Heart right ventricle (tissue), 16 donors: ENCODE measurements at regions of chr10 and their contacts with region 1.

Region 1: DNA sequence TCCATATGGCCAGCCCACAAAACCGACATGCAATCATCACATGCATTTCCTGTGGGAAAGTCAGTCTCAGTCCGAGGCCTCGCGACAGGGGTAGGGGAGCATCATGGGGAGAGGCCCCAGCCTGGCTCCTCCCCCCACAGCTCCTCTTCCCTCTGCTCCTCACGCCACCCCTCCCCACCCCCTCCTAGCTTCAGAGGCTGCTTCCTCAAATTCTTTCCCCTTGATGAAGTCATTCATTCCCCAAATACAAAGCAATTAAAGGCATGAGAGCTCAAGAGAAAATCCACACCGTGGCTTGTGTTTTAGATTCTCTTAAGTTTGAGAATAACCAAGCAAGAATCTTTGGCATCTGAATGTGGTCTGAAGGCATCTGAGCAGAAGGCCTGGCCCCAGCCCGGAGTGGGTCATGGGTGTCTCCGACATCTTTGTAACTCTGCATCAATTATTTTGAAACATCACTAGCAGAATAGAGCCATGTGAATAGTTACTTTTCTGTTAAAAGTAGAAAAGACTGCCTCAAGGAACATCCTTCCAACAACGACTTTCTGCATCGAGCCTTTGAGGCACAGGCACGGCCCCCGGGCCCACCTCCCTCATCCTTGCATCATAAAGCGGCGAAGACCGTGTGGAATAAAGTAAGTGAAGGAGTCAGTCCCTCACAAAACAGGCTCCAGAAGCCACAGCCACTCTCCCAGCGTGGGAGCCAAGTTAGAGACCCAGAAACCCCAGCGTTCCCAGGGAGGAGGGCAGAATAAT is 90.9 kb downstream of the DIP2C start:
- DNase-seq: no peak
- ATAC-seq: no peak
- H3K4me3 ChIP-seq: no peak overlapping the region
- H3K27ac ChIP-seq: no peak overlapping the region
- H3K4me1 ChIP-seq: peaks cover 8 to 55% (median 25%) of the 10 kb centered on the region in 9 donors
- H3K27me3 ChIP-seq: no peaks in the 10 kb centered on the region
- CTCF ChIP-seq: no peak

Region 2: DNA sequence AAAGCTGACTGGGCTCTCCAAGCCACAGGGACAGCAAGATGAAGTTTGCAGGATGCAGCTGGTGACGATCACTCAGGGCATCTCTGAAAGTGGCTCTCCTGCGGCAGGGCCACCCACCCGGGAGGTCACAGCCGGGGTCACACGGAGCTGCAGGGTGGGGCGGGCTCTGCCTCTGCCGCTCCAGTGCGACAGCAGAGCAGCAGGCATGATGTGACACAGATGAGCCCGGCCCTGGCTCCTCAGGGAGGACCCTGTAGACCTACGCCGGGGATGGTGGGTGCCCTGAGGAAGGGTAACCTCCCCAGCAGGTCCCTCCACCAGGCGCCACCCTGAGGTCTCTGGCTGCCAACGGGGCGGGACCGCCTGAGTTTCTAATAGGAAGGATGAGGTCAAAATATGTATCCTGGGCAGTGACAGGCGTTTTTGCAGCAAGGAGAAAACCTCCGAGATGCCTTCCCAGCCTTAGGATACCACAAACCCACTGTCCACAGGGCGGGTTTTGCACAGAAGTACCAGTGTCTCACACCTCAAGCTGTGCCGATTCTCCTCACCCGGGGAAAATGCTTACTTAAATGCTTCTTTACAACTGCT is 205.7 kb after region 1 on chr10:
- intact Hi-C with region 1: loop called in 1 of 10 experiments (anchors 10 kb)
- DNase-seq: no peak
- ATAC-seq: peak in 1 of 8 donors; percentile 7
- H3K4me3 ChIP-seq: no peak overlapping the region
- H3K27ac ChIP-seq: no peak overlapping the region
- H3K4me1 ChIP-seq: peaks cover 0 to 10% (median 4%) of the 10 kb centered on the region in 9 donors
- H3K27me3 ChIP-seq: no peaks in the 10 kb centered on the region
- CTCF ChIP-seq: no peak

Region 3: DNA sequence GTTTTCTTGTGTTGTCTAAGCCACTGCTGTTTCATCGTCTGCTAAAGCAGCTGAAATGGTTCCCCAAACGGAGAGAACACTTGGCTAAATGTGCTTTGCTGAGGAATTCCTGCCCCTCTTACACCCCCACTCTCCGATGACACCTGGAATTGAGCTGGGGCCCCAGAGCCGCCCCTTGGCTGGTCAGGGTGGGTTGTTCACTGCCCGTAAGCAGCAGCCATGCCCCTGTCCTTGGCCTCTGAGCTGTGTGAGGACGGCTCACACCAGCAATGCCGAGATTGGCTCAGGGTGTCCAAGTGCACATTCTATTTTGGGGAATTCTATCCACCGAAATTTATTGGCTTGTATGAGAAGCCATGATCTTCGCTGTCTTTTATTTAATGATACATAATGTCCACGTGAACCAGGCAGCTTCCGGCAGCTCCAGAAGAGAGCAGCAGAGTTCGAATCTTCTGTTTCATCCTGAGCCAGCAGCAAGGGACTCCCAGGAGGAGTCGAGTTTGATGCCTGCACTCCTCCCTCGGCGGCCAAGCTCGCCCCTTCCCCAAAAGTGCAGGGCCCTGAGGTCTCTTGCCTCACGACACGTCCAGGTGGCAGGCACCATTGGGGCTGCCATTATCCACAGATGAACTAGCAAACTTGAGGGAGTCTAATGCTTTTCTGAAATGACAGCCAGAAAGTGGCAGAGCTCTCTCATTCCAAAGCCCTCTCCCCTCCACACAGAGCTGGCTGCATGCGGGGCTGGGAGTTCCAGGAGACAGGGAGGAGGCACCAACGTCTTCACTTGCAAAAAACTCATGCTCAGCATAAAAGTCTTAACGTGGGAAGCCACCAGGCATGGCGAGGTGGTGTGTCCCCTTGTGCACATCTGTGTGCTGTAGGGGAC is 571.6 kb after region 1 on chr10:
- intact Hi-C with region 1: no loop called
- DNase-seq: no peak
- ATAC-seq: no peak
- H3K4me3 ChIP-seq: no peak overlapping the region
- H3K27ac ChIP-seq: no peak overlapping the region
- H3K4me1 ChIP-seq: no peaks in the 10 kb centered on the region
- H3K27me3 ChIP-seq: peaks cover 0 to 31% (median 17%) of the 10 kb centered on the region in 7 donors
- CTCF ChIP-seq: no peak